ENCODE measurements at regions of chr6 and their contacts with region 1.

Region 1: GRCh38 chr6:142883011-142883410 is 62.0 kb downstream of the HIVEP2 start:
- DNase-seq: no peak
- H3K4me3 Mint-ChIP-seq: no peak overlapping the region
- H3K27ac Mint-ChIP-seq: peak overlapping the region; percentile 62
- H3K4me1 Mint-ChIP-seq: peaks cover 79% of the 10 kb centered on the region
- H3K27me3 Mint-ChIP-seq: no peaks in the 10 kb centered on the region

Region 2: DNA sequence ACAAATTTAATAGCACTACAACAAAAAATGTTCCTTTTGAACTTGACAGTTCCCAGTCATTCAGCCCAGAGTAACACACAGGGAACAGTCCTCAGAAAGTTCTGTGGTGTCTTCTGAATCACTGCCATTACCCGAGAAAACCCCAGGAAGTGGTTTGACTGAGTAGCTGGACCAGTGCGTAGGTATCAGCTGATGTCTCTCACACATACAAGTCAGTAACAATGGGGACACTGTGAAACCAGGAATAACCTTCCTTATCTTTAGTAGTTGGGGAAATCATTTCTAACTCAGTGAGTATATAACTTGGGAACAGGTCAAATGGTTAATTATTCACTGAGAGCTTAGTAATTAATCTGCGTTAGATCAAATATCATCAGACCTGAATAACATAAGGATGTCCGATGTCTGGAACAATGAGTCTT is 11.1 kb before region 1 on chr6:
- CTCF ChIA-PET with region 1: interaction called, 18 read pairs
- POLR2A ChIA-PET with region 1: no interaction called
- DNase-seq: peak; percentile 68
- H3K4me3 Mint-ChIP-seq: no peak overlapping the region
- H3K27ac Mint-ChIP-seq: no peak overlapping the region
- H3K4me1 Mint-ChIP-seq: peaks cover 79% of the 10 kb centered on the region
- H3K27me3 Mint-ChIP-seq: no peaks in the 10 kb centered on the region

Region 3: GRCh38 chr6:142952614-142953013 is 69.6 kb after region 1 on chr6:
- CTCF ChIA-PET with region 1: no interaction called
- POLR2A ChIA-PET with region 1: no interaction called
- DNase-seq: no peak
- H3K4me3 Mint-ChIP-seq: no peak overlapping the region
- H3K27ac Mint-ChIP-seq: no peak overlapping the region
- H3K4me1 Mint-ChIP-seq: peaks cover 8% of the 10 kb centered on the region
- H3K27me3 Mint-ChIP-seq: no peaks in the 10 kb centered on the region

Region 4: DNA sequence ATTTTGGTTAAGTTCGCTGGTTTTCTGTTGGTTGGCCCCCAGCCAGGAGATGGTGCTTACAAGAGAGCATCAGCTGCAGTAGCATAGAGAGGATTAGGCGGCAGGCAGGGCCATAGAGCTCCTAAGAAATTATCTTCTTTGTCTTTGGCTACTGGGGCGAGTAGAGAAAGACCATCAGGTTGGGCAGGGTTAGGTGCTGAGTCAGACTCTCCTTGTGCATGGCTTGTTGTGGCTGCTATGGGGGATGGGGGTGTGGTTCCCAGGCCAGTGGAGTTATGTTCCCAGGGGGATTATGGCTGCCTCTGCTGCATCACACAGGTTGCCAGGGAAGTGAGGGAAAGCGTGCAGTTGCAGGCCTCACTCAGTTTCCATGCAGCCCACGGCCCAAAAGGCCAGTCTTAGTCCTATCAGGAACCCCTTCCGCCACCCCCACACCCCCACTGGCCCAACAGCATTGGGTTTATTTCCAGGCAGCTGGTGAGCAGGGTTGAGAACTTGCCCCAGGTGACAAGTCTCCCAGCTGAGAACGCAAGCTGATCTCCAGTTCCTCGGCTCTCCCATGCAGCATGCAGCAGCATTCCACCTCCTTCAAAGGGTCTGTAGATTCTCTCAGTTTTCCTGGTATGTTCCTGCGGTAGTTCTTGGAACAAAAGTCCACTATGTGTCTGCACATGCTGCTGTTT is 1645.9 kb after region 1 on chr6:
- CTCF ChIA-PET with region 1: no interaction called
- POLR2A ChIA-PET with region 1: no interaction called
- DNase-seq: no peak
- H3K4me3 Mint-ChIP-seq: no peak overlapping the region
- H3K27ac Mint-ChIP-seq: no peak overlapping the region
- H3K4me1 Mint-ChIP-seq: peaks cover 6% of the 10 kb centered on the region
- H3K27me3 Mint-ChIP-seq: no peaks in the 10 kb centered on the region

Measured in activated CD4-positive, alpha-beta T cell treated with anti-CD3 and anti-CD28 coated beads, Interleukin-2, amount 10 ng/mL, durations not matched to agents 7 days and 5 days (primary cell).